Body of pancreas (tissue), 4 donors: ENCODE measurements at regions of chr1 and their contacts with region 1.

Region 1: DNA sequence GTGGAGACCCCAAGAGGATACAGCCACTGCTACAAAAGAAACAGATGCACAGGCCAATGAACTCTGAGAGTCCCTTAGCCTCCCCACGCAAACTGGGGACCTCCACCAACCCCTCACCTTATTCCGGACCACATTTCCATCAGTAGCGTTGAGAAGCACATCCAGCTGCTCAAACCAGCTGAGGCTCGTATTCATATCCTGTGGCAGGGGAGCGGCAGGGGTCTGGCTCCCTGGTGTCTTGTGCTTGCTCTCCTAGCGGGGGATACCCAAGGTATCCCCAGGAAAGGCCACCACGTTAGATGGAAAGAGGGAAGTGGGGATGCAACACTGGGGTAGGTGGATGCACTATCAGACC is 481 bp downstream of the CCDC163 start:
- DNase-seq: peak in 2 of 4 donors; percentile 25 to 28
- ATAC-seq: peak; percentile 4
- H3K4me3 ChIP-seq: peak overlapping the region; percentile 39 to 67
- H3K27ac ChIP-seq: peak overlapping the region; percentile 40 to 63 (median 59)
- H3K4me1 ChIP-seq: peaks cover 33% of the 10 kb centered on the region
- H3K27me3 ChIP-seq: no peaks in the 10 kb centered on the region
- CTCF ChIP-seq: no peak
- POLR2A ChIP-seq: no peak

Region 2: DNA sequence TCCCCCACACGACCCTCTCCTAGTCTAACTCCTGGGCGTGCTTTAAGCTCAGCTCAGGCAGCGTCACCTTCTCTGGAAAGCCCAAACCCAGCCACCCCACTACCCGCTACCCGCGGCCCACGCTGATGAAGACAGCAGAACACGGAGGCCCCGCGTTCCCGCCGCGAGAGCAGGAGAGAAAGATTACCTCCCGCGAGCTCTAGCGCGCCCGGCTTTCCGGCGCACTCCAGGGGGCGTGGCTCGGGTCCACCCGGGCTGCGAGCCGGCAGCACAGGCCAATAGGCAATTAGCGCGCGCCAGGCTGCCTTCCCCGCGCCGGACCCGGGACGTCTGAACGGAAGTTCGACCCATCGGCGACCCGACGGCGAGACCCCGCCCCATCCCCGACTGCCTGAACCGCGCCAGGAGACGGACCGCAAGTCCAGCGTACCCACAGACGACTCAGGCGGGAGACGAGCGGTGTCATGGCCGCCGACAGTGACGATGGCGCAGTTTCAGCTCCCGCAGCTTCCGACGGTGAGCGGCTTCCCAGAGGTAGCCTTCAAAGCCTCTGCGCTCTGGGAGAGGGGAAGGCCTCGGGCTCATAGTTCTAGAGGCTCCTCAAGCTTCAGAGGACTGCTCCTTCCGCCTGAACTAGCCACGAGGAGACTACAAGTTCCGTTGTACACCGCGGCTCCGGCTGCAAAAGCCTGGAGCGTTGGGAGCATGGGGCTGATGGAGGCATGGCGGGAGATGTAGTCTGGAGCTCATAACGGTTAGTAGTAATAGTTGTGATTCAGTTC is 159.4 kb before region 1 on chr1 and contains the starts of genes MUTYH and TOE1:
- intact Hi-C with region 1: loop called (anchors 5 kb)
- DNase-seq: peak; percentile 90 to 93 (median 92)
- ATAC-seq: peak; percentile 92
- H3K4me3 ChIP-seq: peak within 1 kb of the TSS; percentile 60 to 93
- H3K27ac ChIP-seq: peak within 1 kb of the TSS; percentile 83 to 99 (median 96)
- H3K4me1 ChIP-seq: peaks cover 27% of the 10 kb centered on the region
- H3K27me3 ChIP-seq: no peaks in the 10 kb centered on the region
- CTCF ChIP-seq: peak in 2 of 7 experiments; percentile 11 to 13
- POLR2A ChIP-seq: peak; percentile 81 to 89 (median 83)
- total RNA-seq, gene MUTYH: 19.7 to 21.8 TPM
- total RNA-seq, gene TOE1: 2.0 to 2.3 TPM